ENCODE measurements at regions of chr1 and their contacts with region 1.

Region 1: GRCh38 chr1:225881969-225882693 is at the start of gene TMEM63A:
- DNase-seq: peak; percentile 92
- H3K4me3 Mint-ChIP-seq: peak within 1 kb of the TSS; percentile 91
- H3K27ac Mint-ChIP-seq: peak within 1 kb of the TSS; percentile 82
- H3K4me1 Mint-ChIP-seq: peaks cover 51% of the 10 kb centered on the region
- H3K27me3 Mint-ChIP-seq: no peaks in the 10 kb centered on the region
- CTCF ChIP-seq: peak; percentile 25
- total RNA-seq, gene TMEM63A: 52.1 and 71.2 TPM in 2 replicates

Region 2: GRCh38 chr1:225896937-225897549 is 14.9 kb after region 1 on chr1:
- CTCF ChIA-PET with region 1: interaction called, 14 read pairs
- POLR2A ChIA-PET with region 1: interaction called, 30 read pairs
- intact Hi-C with region 1: no loop called
- DNase-seq: peak; percentile 78
- H3K4me3 Mint-ChIP-seq: no peak overlapping the region
- H3K27ac Mint-ChIP-seq: peak overlapping the region; percentile 78
- H3K4me1 Mint-ChIP-seq: peaks cover 17% of the 10 kb centered on the region
- H3K27me3 Mint-ChIP-seq: no peaks in the 10 kb centered on the region
- CTCF ChIP-seq: no peak

Region 3: DNA sequence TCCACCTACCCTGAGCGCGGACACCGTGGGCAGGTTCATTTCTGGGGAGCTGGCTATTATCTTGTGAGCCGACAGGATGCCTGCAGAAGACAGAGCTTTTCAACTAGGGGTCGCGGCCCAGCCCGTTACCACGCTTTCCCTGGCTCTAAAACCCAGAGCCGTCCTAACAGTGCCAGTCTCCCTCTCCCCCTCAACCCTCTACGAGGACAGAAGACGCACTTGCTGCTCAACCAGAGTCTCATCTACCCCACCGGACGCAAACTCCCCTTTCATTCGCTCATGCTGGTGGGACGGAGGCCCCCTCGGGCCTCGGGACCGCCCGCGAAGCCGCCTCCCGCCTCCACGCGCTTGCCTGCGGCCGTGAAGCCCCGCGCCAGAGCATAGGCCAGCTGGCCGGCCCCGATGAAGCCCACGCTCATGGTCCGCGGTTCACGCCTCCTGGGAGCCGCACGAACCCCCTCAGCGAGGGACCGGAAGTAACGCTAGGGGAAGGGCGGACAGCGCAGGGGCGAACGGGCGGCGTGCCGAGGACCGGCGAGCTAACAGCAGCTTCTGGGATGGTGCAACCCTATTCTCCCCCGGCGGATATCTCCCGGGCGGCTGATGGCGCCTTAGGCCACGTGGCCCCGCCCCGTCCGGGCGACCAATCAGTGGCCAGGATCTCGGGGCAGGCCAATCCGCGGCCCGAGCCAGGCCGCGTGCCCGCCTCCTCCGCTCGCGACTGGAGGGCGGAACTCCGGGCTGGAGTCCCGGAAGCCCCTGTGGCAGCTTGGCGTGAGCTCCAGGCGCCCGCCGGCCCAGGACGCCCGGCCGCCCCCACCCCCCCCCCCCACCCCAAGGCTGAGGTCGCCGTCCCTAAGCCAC is 41.8 kb after region 1 on chr1 and contains the start of gene PYCR2:
- CTCF ChIA-PET with region 1: interaction called, 34 read pairs
- POLR2A ChIA-PET with region 1: interaction called, 263 read pairs
- intact Hi-C with region 1: loop called (anchors 2 kb)
- DNase-seq: peak; percentile 99
- H3K4me3 Mint-ChIP-seq: peak within 1 kb of the TSS; percentile 99
- H3K27ac Mint-ChIP-seq: peak within 1 kb of the TSS; percentile 95
- H3K4me1 Mint-ChIP-seq: peaks cover 42% of the 10 kb centered on the region
- H3K27me3 Mint-ChIP-seq: no peaks in the 10 kb centered on the region
- CTCF ChIP-seq: no peak
- total RNA-seq, gene PYCR2: 172 and 173 TPM in 2 replicates

Region 4: GRCh38 chr1:225977937-225978748 is 96.0 kb after region 1 on chr1:
- CTCF ChIA-PET with region 1: interaction called, 19 read pairs
- POLR2A ChIA-PET with region 1: interaction called, 18 read pairs
- intact Hi-C with region 1: loop called (anchors 1 kb)
- DNase-seq: no peak
- H3K4me3 Mint-ChIP-seq: no peak overlapping the region
- H3K27ac Mint-ChIP-seq: no peak overlapping the region
- H3K4me1 Mint-ChIP-seq: peaks cover 5% of the 10 kb centered on the region
- H3K27me3 Mint-ChIP-seq: no peaks in the 10 kb centered on the region
- CTCF ChIP-seq: no peak

Measured in MCF 10A (cell line).